Gastrocnemius medialis (tissue), 4 donors: ENCODE measurements at regions of chrX and their contacts with region 1.

Region 1: GRCh38 chrX:47960406-47960805 is 43.4 kb downstream of the ZNF182 start:
- DNase-seq: no peak
- ATAC-seq: no peak
- H3K4me3 ChIP-seq: no peak overlapping the region
- H3K27ac ChIP-seq: no peak overlapping the region
- H3K4me1 ChIP-seq: no peaks in the 10 kb centered on the region
- H3K27me3 ChIP-seq: no peaks in the 10 kb centered on the region
- CTCF ChIP-seq: no peak
- POLR2A ChIP-seq: no peak

Region 2: GRCh38 chrX:47873123-47873522 is 87.3 kb before region 1 on chrX:
- in situ Hi-C with region 1: no loop called
- intact Hi-C with region 1: no loop called
- DNase-seq: no peak
- ATAC-seq: no peak
- H3K4me3 ChIP-seq: no peak overlapping the region
- H3K27ac ChIP-seq: no peak overlapping the region
- H3K4me1 ChIP-seq: no peaks in the 10 kb centered on the region
- H3K27me3 ChIP-seq: no peaks in the 10 kb centered on the region
- CTCF ChIP-seq: no peak
- POLR2A ChIP-seq: no peak

Region 3: GRCh38 chrX:47898024-47898423 is 62.4 kb before region 1 on chrX:
- in situ Hi-C with region 1: loop called in 1 of 4 experiments (anchors 10 kb)
- intact Hi-C with region 1: no loop called
- DNase-seq: no peak
- ATAC-seq: no peak
- H3K4me3 ChIP-seq: no peak overlapping the region
- H3K27ac ChIP-seq: no peak overlapping the region
- H3K4me1 ChIP-seq: no peaks in the 10 kb centered on the region
- H3K27me3 ChIP-seq: no peaks in the 10 kb centered on the region
- CTCF ChIP-seq: no peak
- POLR2A ChIP-seq: no peak

Region 4: GRCh38 chrX:47927212-47927611 is 33.2 kb before region 1 on chrX:
- in situ Hi-C with region 1: no loop called
- intact Hi-C with region 1: no loop called
- DNase-seq: no peak
- ATAC-seq: no peak
- H3K4me3 ChIP-seq: no peak overlapping the region
- H3K27ac ChIP-seq: no peak overlapping the region
- H3K4me1 ChIP-seq: no peaks in the 10 kb centered on the region
- H3K27me3 ChIP-seq: no peaks in the 10 kb centered on the region
- CTCF ChIP-seq: no peak
- POLR2A ChIP-seq: no peak